ENCODE measurements at regions of chr17 and their contacts with region 1.

Region 1: DNA sequence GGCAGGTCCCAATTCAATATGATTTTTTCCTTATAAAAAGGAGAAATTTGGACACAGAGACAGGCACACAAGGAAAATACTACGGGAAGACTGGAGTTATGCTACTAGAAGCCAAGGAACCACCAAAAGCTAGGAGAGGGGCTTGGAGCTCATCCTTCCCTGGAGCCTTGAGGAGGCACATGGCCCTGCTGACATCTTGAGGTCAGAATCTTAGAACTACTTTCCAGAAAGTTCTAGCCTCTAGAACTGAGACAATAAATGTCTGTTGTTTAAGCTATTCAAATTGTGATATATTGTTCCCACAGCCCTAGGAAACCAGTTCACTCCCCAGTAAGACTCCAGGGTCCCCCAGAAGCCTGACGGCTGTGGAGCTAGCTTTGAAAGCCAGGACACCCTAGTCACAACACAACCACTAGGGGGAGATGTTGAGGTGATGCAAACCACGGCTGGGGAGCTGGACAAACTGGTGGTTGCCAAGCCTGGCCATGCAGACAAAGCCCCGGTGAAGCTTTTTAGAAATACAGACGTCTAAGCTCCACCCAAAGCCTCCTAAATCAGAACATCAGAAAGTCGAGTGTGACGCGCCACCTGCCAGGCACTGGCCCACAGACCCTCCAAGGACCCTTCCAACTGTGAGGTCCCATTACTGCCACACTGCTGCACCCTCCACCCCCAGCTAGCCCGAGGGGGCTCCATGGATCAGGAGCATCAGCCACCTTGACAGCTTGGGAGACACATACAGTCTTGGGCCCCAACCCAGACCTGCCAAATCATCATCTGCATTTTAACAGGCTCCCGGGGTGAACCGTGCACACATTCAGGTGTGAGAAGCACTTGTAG is 106.4 kb downstream of the SLC39A11 start:
- DNase-seq: peak; percentile 53
- ATAC-seq: peak; percentile 85
- H3K4me3 ChIP-seq: no peak overlapping the region
- H3K27ac ChIP-seq: no peak overlapping the region
- H3K4me1 ChIP-seq: no peaks in the 10 kb centered on the region
- H3K27me3 ChIP-seq: no peaks in the 10 kb centered on the region
- CTCF ChIP-seq: peak; percentile 91

Region 2: GRCh38 chr17:72872396-72872795 is 113.7 kb before region 1 on chr17:
- CTCF ChIA-PET with region 1: interaction called, 12 read pairs
- POLR2A ChIA-PET with region 1: no interaction called
- in situ Hi-C with region 1: no loop called
- intact Hi-C with region 1: no loop called
- DNase-seq: no peak
- ATAC-seq: no peak
- H3K4me3 ChIP-seq: no peak overlapping the region
- H3K27ac ChIP-seq: no peak overlapping the region
- H3K4me1 ChIP-seq: no peaks in the 10 kb centered on the region
- H3K27me3 ChIP-seq: no peaks in the 10 kb centered on the region
- CTCF ChIP-seq: no peak

Region 3: GRCh38 chr17:72997559-72997958 is 11.5 kb after region 1 on chr17:
- CTCF ChIA-PET with region 1: no interaction called
- POLR2A ChIA-PET with region 1: interaction called, 12 read pairs
- in situ Hi-C with region 1: no loop called
- intact Hi-C with region 1: no loop called
- DNase-seq: no peak
- ATAC-seq: no peak
- H3K4me3 ChIP-seq: no peak overlapping the region
- H3K27ac ChIP-seq: no peak overlapping the region
- H3K4me1 ChIP-seq: 0 out of 2 replicates have a peak, but pooled peaks cover 4% of the 10 kb centered on the region
- H3K27me3 ChIP-seq: no peaks in the 10 kb centered on the region
- CTCF ChIP-seq: no peak

Region 4: GRCh38 chr17:73068322-73069153 is 82.4 kb after region 1 on chr17:
- CTCF ChIA-PET with region 1: no interaction called
- POLR2A ChIA-PET with region 1: no interaction called
- in situ Hi-C with region 1: loop called (anchors 5 kb)
- intact Hi-C with region 1: no loop called
- DNase-seq: no peak
- ATAC-seq: no peak
- H3K4me3 ChIP-seq: no peak overlapping the region
- H3K27ac ChIP-seq: no peak overlapping the region
- H3K4me1 ChIP-seq: peaks cover 6% of the 10 kb centered on the region; the same call in 1 of the 2 replicates
- H3K27me3 ChIP-seq: no peaks in the 10 kb centered on the region
- CTCF ChIP-seq: no peak

Region 5: DNA sequence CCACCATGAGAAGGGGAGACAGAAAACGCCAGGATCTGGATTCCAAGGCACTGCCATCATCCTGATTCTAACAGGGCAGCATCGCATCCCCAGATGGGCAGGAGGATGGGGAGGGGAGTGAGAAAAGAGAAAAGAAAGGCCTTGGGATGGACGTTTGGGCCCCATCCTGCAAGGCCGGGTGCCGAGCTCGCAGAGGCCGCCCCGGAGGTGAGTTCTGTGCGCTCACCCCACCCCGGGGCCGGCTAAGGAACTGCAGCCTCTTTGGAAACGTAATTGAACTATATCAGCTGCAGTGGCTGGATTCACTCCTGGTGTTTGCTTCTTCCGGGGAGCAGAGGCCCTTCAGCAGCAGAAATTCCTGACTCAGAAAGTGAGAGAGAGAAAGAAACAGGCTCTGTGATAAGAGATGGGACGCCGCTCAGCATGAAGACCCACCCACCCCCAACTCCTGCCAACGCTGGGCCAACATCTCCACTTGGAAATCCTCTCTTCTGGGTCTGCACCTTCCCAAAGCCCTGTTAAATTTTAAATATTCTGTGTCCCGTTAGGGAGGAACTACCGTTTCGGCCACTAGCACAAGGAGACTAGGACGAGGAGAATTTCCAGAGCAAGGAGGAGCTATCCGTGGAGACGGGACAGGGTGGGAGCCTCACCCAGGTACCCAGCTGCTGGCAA is 170.2 kb after region 1 on chr17:
- CTCF ChIA-PET with region 1: interaction called, 10 read pairs
- POLR2A ChIA-PET with region 1: no interaction called
- in situ Hi-C with region 1: no loop called
- intact Hi-C with region 1: loop called (anchors 10 kb)
- DNase-seq: peak; percentile 17
- ATAC-seq: peak; percentile 96
- H3K4me3 ChIP-seq: peak overlapping the region in 1 of 2 experiments; percentile 19; a peak in 2 of 4 replicates
- H3K27ac ChIP-seq: peak overlapping the region; percentile 44; the same call in 1 of the 2 replicates
- H3K4me1 ChIP-seq: peaks cover 16% of the 10 kb centered on the region
- H3K27me3 ChIP-seq: no peaks in the 10 kb centered on the region
- CTCF ChIP-seq: peak; percentile 95

Region 6: GRCh38 chr17:73166731-73167581 is 180.9 kb after region 1 on chr17:
- CTCF ChIA-PET with region 1: interaction called, 4 read pairs
- POLR2A ChIA-PET with region 1: interaction called, 14 read pairs
- in situ Hi-C with region 1: no loop called
- intact Hi-C with region 1: no loop called
- DNase-seq: no peak
- ATAC-seq: peak; percentile 9; the same call in 1 of the 2 replicates
- H3K4me3 ChIP-seq: peak overlapping the region; percentile 44 to 66; a peak in 3 of 4 replicates
- H3K27ac ChIP-seq: no peak overlapping the region; the same call in 1 of the 2 replicates
- H3K4me1 ChIP-seq: peaks cover 18% of the 10 kb centered on the region
- H3K27me3 ChIP-seq: no peaks in the 10 kb centered on the region
- CTCF ChIP-seq: no peak